Activated T-helper 2 cell treated with anti-CD3 and anti-CD28 coated beads, Interferon-gamma antibody, Interleukin-2, Interleukin-4, amounts not matched to agents 10 μg/mL and 5 μg/mL and 100 μg/mL, durations not matched to agents 14 hours and 24 hours and 36 hours (primary cell): ENCODE measurements at regions of chrX and their contacts with region 1.

Region 1: DNA sequence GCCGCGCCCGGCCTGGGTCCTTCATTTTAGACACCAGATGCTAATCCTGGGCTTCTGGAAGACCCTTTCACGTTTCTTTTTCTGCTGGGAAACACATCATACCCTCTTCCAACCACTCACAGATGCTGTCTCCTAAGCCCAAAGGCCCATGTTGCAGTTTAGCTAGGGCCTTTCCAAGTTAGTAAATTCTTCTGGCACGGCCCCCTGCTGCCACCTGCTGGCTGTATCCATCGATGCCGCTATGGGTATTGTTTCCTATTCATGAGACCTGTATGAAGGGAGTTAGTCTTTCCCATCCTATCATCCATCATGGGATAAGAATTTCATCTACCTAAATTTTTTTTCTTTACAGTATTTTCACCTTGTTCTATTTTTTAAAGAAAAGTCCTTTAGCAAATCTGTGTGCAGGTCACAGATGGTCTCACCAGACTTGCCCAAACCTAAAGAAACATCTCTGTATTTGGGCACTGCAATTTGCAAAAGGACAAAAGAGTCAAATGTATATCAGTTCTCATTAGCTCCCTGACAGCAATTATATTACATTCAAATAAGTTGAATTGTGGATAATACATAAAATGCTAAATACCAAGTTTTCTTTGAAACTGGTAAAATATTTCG is 37.8 kb upstream of the SLC9A7 start:
- DNase-seq: peak; percentile 54
- H3K4me3 Mint-ChIP-seq: no peak overlapping the region
- H3K27ac Mint-ChIP-seq: no peak overlapping the region
- H3K4me1 Mint-ChIP-seq: peaks cover 18% of the 10 kb centered on the region
- H3K27me3 Mint-ChIP-seq: no peaks in the 10 kb centered on the region

Region 2: DNA sequence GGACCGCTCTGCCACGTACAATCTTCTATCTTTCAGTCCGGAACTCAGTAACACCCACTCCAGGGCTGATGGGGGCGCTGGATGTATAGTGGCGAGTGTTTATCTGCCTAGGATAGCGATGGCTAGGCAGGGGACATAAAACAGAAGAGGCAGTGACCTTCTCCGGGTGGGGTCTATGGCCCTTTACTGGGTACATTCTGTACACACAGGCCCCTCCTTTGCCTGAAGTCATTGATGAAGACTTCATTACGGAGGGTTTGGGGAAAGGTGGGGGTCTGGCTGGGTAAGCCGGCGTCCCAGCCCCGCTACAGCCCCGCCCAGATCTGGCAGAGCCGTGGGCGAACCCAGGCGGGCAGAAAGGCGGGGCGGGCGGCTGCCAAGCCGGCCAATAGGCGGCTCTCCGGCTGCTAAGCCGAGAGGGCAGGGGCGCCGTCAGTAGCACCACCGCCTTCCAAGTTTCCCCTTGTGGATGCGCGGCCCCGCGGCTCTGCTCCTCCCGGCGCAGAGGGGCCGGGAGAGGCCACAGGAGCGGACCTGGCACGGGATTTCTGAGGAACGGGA is 223.3 kb before region 1 on chrX and contains the start of gene CHST7:
- intact Hi-C with region 1: loop called (anchors 10 kb)
- DNase-seq: peak; percentile 38
- H3K4me3 Mint-ChIP-seq: peak within 1 kb of the TSS; percentile 78
- H3K27ac Mint-ChIP-seq: peak within 1 kb of the TSS; percentile 42
- H3K4me1 Mint-ChIP-seq: peaks cover 32% of the 10 kb centered on the region
- H3K27me3 Mint-ChIP-seq: no peaks in the 10 kb centered on the region
- total RNA-seq, gene CHST7: 3.8 TPM in 2 replicates

Region 3: GRCh38 chrX:46642145-46642544 is 154.5 kb before region 1 on chrX:
- intact Hi-C with region 1: loop called (anchors 10 kb)
- DNase-seq: no peak
- H3K4me3 Mint-ChIP-seq: no peak overlapping the region
- H3K27ac Mint-ChIP-seq: peak overlapping the region; percentile 8
- H3K4me1 Mint-ChIP-seq: peaks cover 19% of the 10 kb centered on the region
- H3K27me3 Mint-ChIP-seq: no peaks in the 10 kb centered on the region

Region 4: GRCh38 chrX:46704767-46705386 is 91.8 kb before region 1 on chrX:
- intact Hi-C with region 1: loop called (anchors 10 kb)
- DNase-seq: peak; percentile 27
- H3K4me3 Mint-ChIP-seq: peak overlapping the region; percentile 51
- H3K27ac Mint-ChIP-seq: peak overlapping the region; percentile 96
- H3K4me1 Mint-ChIP-seq: peaks cover 54% of the 10 kb centered on the region
- H3K27me3 Mint-ChIP-seq: no peaks in the 10 kb centered on the region

Region 5: GRCh38 chrX:46758906-46759644 is 37.6 kb before region 1 on chrX and contains the start of gene SLC9A7:
- intact Hi-C with region 1: loop called (anchors 1 kb)
- DNase-seq: peak; percentile 76
- H3K4me3 Mint-ChIP-seq: peak within 1 kb of the TSS; percentile 98
- H3K27ac Mint-ChIP-seq: peak within 1 kb of the TSS; percentile 94
- H3K4me1 Mint-ChIP-seq: peaks cover 27% of the 10 kb centered on the region
- H3K27me3 Mint-ChIP-seq: no peaks in the 10 kb centered on the region
- total RNA-seq, gene SLC9A7: 42.5 and 44.2 TPM in 2 replicates

Region 6: DNA sequence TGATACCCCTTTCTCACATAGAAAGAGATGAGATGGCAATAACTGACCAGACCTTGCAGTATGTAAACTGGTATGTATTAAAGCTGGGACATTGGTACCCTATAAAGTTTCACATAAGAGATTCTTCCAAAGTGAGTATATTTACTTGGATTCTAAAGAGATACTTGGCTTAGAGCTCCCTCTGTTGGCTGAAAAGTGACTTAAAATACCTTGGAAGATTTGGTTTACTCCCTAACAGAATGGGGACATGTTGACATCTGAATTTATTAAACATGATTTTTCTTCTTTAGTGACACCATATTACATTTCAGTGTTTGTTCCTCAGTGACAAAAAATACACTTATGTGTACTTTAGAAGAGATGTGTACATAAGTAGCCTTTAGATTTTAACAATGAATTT is 233.7 kb after region 1 on chrX:
- intact Hi-C with region 1: loop called (anchors 2 kb)
- DNase-seq: no peak
- H3K4me3 Mint-ChIP-seq: no peak overlapping the region
- H3K27ac Mint-ChIP-seq: no peak overlapping the region
- H3K4me1 Mint-ChIP-seq: no peaks in the 10 kb centered on the region
- H3K27me3 Mint-ChIP-seq: no peaks in the 10 kb centered on the region